ENCODE measurements at regions of chr2 and their contacts with region 1.

Region 1: GRCh38 chr2:237572021-237572741 is 5.8 kb downstream of the PRLH start:
- DNase-seq: peak; percentile 88
- H3K4me3 ChIP-seq: no peak overlapping the region
- H3K27ac ChIP-seq: peak overlapping the region in 1 of 2 donors; percentile 52
- H3K4me1 ChIP-seq: peaks cover 6% of the 10 kb centered on the region
- H3K27me3 ChIP-seq: no peaks in the 10 kb centered on the region
- CTCF ChIP-seq: peak; percentile 96 to 99 (median 99)
- POLR2A ChIP-seq: no peak

Region 2: GRCh38 chr2:237154082-237154638 is 418.0 kb before region 1 on chr2:
- intact Hi-C with region 1: loop called (anchors 10 kb)
- DNase-seq: no peak
- H3K4me3 ChIP-seq: no peak overlapping the region
- H3K27ac ChIP-seq: no peak overlapping the region
- H3K4me1 ChIP-seq: no peaks in the 10 kb centered on the region
- H3K27me3 ChIP-seq: no peaks in the 10 kb centered on the region
- CTCF ChIP-seq: peak in 3 of 4 experiments; percentile 44 to 69 (median 63)
- POLR2A ChIP-seq: no peak

Region 3: DNA sequence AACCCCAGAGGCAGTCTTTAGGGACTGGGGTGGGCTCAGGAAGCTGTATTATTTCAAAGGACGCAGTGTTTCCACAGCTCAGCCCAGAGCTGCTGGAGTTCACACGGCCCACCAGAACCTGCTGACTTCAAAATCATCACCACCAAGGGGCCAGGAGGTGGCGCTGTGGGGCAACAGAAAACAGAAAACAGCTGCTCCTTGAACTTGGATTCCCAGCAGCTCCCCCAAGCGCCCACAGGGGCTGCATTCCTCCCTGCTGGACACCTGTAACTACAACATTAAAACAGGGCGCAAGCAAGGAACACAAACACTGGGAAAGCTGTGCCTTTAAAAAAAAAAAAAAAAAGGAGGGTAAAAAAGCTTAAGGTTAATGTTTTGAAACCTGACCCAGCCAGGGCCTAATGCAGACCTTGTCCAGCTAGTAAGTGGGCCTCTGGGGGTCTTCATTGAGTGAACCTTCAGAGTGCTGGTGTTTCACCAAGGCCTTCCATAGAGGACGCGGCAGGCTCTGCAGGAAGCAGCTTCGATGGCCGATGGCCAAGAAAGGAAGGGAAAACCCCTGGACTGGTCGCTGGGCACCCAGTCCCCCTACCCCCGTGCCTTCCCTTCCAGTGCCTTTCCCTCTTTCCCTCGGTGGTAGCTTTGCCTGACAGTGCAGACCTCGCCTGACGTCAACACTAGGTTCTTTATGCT is 59.3 kb before region 1 on chr2:
- intact Hi-C with region 1: loop called (anchors 1 kb)
- DNase-seq: peak; percentile 86
- H3K4me3 ChIP-seq: no peak overlapping the region
- H3K27ac ChIP-seq: peak overlapping the region; percentile 71 to 98
- H3K4me1 ChIP-seq: peaks cover 39% of the 10 kb centered on the region
- H3K27me3 ChIP-seq: no peaks in the 10 kb centered on the region
- CTCF ChIP-seq: peak; percentile 77 to 94 (median 93)
- POLR2A ChIP-seq: no peak

Region 4: DNA sequence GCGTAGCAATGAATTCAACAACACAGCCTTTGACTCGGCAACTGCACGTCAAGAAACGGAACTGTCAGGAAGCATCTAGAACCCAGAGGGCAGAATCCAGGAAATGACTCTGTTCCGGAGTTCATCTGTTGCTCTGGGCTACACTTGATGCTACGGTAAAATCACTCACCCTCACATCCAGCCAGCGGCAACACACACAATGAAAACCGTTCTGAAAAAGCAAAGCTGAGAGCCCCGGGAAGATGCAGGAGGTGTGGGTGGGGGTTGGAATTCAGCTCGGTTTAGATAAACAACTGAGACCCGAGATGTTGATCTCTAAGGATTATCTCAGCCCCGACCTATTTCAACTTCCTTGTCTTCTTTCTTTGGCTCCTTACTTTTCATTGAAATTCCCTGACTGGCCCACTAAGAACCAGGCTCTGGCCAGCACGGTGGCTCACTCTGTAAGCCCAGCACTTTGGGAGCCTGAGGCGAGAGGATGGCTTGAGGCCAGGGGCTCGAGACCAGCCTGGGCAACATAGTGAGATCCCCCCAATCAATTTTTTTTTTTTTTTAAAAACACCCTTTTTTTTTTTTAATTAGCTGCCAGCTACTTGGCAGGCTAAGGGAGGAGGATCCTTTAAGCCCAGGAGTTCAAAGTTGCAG is 31.7 kb after region 1 on chr2:
- intact Hi-C with region 1: no loop called
- DNase-seq: no peak
- H3K4me3 ChIP-seq: no peak overlapping the region
- H3K27ac ChIP-seq: no peak overlapping the region
- H3K4me1 ChIP-seq: no peaks in the 10 kb centered on the region
- H3K27me3 ChIP-seq: no peaks in the 10 kb centered on the region
- CTCF ChIP-seq: no peak
- POLR2A ChIP-seq: peak; percentile 19

Region 5: DNA sequence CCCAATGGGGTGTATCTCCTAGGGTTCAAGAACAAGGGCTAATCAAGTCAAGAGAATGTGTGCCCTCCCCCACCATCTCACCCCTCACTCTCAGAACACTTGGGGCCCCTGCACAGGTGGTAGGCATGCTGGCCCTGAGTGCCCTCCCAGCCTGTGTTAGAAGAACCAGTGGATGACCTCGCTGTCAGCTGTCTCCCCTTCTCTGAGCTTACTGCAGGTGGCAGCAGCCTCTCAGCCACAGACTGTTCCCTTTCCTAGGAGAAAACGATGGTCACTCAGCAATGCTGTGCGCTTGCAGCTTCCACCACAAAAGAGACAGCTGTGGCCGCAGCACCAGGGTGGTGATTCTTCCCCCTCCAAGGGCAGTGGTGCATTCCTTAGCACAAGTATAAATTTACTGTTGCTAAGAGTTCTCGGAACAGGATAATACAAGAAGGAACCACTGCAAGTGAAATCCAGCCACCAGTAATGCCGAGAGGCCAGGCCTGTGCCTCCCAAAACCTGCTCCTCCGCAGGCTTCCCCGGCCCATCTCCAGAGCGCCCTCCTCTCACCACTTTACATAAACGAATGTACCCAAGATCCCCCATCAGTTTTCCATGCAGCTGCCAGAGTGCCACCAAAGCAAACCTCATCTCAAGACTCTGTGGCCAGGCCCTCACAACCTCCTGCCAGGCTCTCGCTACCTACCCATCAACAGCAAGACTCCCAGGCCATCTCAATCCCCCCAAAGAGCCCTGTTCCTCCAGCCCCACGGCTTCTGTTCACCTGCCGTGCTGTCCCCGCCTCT is 286.3 kb after region 1 on chr2:
- intact Hi-C with region 1: no loop called
- DNase-seq: peak; percentile 71
- H3K4me3 ChIP-seq: peak overlapping the region; percentile 48 to 58
- H3K27ac ChIP-seq: peak overlapping the region; percentile 76 to 78
- H3K4me1 ChIP-seq: peaks cover 3% of the 10 kb centered on the region
- H3K27me3 ChIP-seq: no peaks in the 10 kb centered on the region
- CTCF ChIP-seq: peak; percentile 22 to 88 (median 75)
- POLR2A ChIP-seq: no peak

Measured in prostate gland (tissue), 2 donors.